Activated CD8-positive, alpha-beta T cell treated with anti-CD3 and anti-CD28 coated beads, Interleukin-2, amount 10 ng/mL, durations not matched to agents 7 days and 5 days (primary cell): ENCODE measurements at regions of chr7 and their contacts with region 1.

Region 1: GRCh38 chr7:108497082-108497725 is 28.7 kb downstream of the PNPLA8 start:
- DNase-seq: peak; percentile 68
- ATAC-seq: peak; percentile 44
- H3K4me3 Mint-ChIP-seq: no peak overlapping the region
- H3K27ac Mint-ChIP-seq: no peak overlapping the region
- H3K4me1 Mint-ChIP-seq: no peaks in the 10 kb centered on the region
- H3K27me3 Mint-ChIP-seq: no peaks in the 10 kb centered on the region

Region 2: GRCh38 chr7:108114117-108114841 is 382.9 kb before region 1 on chr7:
- CTCF ChIA-PET with region 1: interaction called, 12 read pairs
- POLR2A ChIA-PET with region 1: no interaction called
- DNase-seq: peak; percentile 45
- ATAC-seq: peak; percentile 58
- H3K4me3 Mint-ChIP-seq: no peak overlapping the region
- H3K27ac Mint-ChIP-seq: no peak overlapping the region
- H3K4me1 Mint-ChIP-seq: peaks cover under 1% of the 10 kb centered on the region
- H3K27me3 Mint-ChIP-seq: peaks cover 1% of the 10 kb centered on the region

Region 3: GRCh38 chr7:108181073-108181985 is 315.9 kb before region 1 on chr7:
- CTCF ChIA-PET with region 1: interaction called, 26 read pairs
- POLR2A ChIA-PET with region 1: no interaction called
- DNase-seq: no peak
- ATAC-seq: no peak
- H3K4me3 Mint-ChIP-seq: no peak overlapping the region
- H3K27ac Mint-ChIP-seq: no peak overlapping the region
- H3K4me1 Mint-ChIP-seq: no peaks in the 10 kb centered on the region
- H3K27me3 Mint-ChIP-seq: no peaks in the 10 kb centered on the region

Region 4: DNA sequence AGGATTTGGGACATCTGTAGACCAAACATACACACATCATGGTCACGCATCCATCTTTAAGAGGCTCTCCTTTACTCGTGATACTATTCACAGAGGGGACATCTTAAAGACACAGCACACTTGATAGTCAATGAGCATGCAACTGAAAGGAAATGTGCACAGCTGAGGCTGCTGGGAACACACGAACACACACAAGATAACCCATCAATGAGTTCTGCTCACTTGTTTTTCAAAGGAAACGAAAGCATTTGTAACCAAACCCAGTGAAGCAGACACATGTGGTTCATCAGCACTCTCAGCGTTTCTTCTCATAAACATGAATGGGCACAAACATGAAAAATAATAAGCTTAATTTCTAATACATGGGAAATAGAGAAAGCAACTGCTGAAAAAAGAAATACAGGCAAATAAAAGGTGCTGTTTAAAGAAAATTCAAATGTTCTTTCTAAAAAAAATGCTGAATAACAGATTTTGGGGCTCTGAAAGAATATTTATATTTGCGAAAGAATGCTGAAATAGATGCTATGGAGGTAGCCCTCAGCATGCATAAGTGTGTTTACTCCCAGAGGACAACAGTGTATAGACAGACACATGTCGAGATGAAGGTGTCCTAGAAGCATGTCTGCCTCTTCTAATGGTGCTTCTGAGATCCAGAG is 307.3 kb before region 1 on chr7:
- CTCF ChIA-PET with region 1: interaction called, 10 read pairs
- POLR2A ChIA-PET with region 1: no interaction called
- DNase-seq: peak; percentile 33
- ATAC-seq: peak; percentile 73
- H3K4me3 Mint-ChIP-seq: no peak overlapping the region
- H3K27ac Mint-ChIP-seq: peak overlapping the region; percentile 30
- H3K4me1 Mint-ChIP-seq: peaks cover 17% of the 10 kb centered on the region
- H3K27me3 Mint-ChIP-seq: no peaks in the 10 kb centered on the region

Region 5: DNA sequence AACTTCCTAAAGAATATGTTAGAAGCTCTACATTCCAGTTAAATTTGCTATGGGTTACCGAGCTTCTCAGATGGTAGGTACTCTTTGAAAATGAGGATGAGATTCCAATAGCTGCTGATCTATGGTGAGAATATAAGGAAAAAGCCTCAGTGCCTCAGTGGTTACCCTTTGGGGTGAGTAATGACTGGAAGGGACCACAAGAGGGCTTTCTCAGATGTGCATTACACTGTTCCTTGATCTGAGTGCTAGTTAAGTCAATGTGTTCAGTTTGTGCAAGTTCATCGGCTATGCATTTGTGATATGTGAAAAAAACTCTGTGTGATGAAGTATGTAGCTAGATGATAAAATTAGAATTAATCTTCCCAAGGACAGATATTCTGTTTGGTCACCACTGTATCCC is 44.5 kb before region 1 on chr7:
- CTCF ChIA-PET with region 1: interaction called, 39 read pairs
- POLR2A ChIA-PET with region 1: no interaction called
- DNase-seq: peak; percentile 34
- ATAC-seq: peak; percentile 34
- H3K4me3 Mint-ChIP-seq: no peak overlapping the region
- H3K27ac Mint-ChIP-seq: no peak overlapping the region
- H3K4me1 Mint-ChIP-seq: peaks cover 13% of the 10 kb centered on the region
- H3K27me3 Mint-ChIP-seq: peaks cover 37% of the 10 kb centered on the region

Region 6: DNA sequence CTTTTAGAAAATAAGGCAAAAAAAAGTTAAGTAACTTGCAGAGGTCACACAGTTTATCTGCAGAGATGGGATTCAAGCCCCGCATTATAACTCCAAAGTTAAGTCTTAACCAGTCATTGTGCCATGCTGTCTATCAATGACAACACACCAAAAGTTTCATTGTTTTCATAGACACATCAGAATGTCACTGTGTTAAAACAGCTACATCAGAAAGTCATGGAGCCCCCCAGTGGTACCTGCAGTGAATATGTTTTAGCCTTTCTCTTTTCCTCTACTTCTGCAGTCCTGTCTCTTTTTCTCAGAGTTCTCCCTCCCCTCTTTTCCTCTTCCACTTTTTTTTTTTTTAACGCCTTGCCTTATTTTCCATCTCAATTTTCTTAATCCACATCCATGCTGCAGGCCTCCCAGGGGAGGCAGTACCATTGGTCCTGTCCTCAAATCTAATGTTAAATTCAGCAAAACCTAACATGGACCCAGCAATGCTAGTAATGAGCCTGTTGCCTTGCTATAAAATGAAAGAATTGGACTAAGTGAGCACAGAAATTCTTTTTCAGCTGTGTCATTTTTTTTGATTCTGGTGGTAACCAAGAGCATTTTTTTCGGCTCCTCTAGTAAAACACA is 37.2 kb before region 1 on chr7:
- CTCF ChIA-PET with region 1: interaction called, 39 read pairs
- POLR2A ChIA-PET with region 1: no interaction called
- DNase-seq: peak; percentile 45
- ATAC-seq: no peak
- H3K4me3 Mint-ChIP-seq: no peak overlapping the region
- H3K27ac Mint-ChIP-seq: no peak overlapping the region
- H3K4me1 Mint-ChIP-seq: peaks cover 29% of the 10 kb centered on the region
- H3K27me3 Mint-ChIP-seq: peaks cover 38% of the 10 kb centered on the region

Region 7: DNA sequence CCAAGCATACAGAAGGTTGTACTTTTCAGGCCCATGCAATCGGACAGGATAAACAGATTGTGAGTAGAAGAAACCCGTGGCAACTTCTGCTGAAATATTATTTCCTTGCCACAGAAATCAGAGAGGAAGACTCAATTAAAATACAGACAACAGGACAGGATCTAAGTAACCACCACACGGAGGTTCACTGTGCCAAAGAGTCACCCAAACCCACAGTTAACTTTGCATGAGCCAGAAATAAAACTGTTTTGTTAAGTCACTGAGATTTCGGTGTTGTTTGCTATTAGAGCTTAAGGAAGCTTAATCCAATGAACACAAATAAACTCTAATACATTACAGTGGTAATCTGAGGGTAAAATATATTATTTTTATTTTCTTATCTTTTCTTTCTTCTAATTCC is 14.7 kb after region 1 on chr7:
- CTCF ChIA-PET with region 1: interaction called, 11 read pairs
- POLR2A ChIA-PET with region 1: no interaction called
- DNase-seq: no peak
- ATAC-seq: no peak
- H3K4me3 Mint-ChIP-seq: no peak overlapping the region
- H3K27ac Mint-ChIP-seq: no peak overlapping the region
- H3K4me1 Mint-ChIP-seq: peaks cover 2% of the 10 kb centered on the region
- H3K27me3 Mint-ChIP-seq: no peaks in the 10 kb centered on the region

Region 8: DNA sequence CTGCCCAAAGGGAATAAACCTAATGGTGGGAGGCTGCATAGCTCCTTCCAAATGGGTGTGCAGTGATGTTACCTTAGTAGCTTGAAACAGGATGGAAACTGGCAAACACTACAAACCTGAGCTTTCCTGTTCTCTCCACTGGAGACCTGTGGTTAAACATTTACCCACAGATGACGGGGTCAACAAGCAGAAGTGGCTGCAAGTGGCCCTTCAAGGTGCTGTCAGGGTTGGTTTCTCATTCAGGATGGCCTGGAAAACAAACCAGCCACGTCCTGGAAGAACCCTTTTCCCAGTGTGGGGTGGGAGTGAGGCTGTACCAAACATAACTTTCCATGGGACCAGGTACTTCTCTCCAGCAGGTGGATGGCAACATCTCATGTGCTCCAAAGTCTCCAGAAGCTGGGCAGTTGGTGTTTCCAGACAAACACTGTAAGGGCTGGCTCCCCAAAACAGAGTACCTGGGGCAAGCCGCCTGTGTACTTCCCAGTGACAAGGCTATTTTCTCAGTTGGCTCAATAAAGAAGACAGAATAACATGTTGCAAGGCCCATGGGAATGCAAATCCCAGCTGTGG is 139.9 kb after region 1 on chr7:
- CTCF ChIA-PET with region 1: no interaction called
- POLR2A ChIA-PET with region 1: no interaction called
- DNase-seq: no peak
- ATAC-seq: no peak
- H3K4me3 Mint-ChIP-seq: no peak overlapping the region
- H3K27ac Mint-ChIP-seq: no peak overlapping the region
- H3K4me1 Mint-ChIP-seq: no peaks in the 10 kb centered on the region
- H3K27me3 Mint-ChIP-seq: peaks cover 5% of the 10 kb centered on the region